GM10248 (cell line): ENCODE measurements at regions of chr2 and their contacts with region 1.

Region 1: DNA sequence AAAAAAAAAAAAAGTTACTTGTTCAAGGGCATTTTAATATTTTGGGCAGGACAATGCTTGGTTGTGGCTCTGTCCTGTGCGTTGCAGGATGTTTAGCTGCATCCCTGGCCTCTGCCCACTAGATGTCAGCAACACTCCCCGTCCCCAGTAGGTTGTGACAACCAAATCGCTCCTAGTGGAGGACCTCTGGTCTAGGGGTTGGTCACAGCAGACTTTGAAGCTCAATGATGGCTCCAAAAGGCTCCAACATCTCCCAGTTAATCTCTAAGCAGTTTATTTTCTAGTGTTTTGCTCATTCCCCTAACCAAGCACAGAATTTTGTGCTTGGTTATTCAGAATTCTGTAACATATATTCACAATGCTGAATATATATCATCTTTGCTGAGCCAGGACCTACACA is 67.0 kb downstream of the CHRNA1 start:
- DNase-seq: peak; percentile 77
- CTCF ChIP-seq: peak; percentile 86

Region 2: GRCh38 chr2:174300089-174300488 is 397.2 kb before region 1 on chr2:
- CTCF ChIA-PET with region 1: no interaction called
- POLR2A ChIA-PET with region 1: no interaction called
- DNase-seq: no peak
- CTCF ChIP-seq: no peak

Region 3: DNA sequence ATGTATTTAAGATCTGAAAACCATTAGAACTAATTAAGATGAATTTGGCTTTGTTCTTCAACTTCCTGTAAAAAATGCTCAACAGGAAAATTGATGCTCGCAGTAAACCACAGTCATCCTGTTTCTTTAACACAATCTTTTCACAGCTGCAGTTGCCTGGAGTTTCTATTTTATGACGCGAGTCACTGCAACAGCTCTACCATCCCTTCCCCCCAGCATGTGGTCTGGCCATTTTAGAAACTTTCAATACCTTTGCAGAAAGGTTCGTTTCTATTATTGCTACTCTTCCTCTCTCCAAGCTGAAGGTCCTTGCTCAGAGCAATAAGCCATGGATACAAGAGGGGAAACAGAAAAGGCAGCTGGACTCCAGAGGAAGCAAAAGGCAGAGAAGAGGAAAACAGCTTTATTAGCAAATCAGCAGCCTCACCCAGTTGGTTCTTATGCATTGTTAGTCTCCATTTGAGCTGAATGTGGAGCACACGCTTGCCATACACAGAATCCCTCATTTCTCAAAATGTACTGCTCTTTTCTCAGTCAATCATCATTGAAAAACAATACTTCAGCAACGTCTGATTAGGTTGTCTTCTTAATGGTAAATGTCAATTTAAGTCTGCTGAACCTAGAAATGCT is 103.6 kb before region 1 on chr2:
- CTCF ChIA-PET with region 1: interaction called, 10 read pairs
- POLR2A ChIA-PET with region 1: no interaction called
- DNase-seq: peak; percentile 50
- CTCF ChIP-seq: no peak

Region 4: DNA sequence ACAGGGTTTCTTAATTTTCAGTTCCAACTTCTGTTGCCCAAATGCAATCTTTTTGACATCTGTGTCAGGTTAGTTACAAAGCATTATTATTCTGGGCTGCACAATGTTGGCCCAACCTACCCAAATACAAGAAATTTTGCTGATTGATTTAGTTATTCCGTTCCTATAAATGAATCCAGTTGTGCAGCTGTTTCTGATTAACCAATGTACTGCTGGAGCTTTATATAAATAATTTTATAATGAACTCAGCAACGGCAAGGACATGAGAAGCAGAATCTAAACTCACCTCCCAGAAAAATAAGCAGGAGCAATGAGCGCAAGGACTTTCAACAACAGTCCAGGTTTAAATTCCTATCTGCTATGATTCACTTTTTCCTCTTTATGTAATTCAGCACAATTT is 23.4 kb before region 1 on chr2:
- CTCF ChIA-PET with region 1: interaction called, 10 read pairs
- POLR2A ChIA-PET with region 1: no interaction called
- DNase-seq: no peak
- CTCF ChIP-seq: no peak

Region 5: DNA sequence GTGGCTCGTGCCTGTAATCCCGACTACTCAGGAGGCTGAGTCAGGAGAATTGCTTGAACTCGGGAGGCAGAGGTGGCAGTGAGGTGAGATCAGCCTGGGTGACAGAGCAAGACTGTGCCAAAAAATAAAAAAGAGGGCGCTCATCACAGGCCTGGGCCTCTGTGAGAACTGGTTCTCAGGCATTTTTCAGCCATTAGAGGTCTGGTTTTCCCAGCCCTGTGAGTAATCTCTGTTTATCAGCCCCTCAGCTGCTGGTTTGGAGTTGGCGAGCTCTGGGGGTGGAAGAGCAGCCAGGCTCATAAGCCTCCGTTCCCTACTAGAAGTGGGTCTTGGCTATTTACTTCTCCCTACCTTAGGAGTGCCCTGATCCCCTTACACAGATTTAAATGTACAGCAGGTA is 14.0 kb after region 1 on chr2:
- CTCF ChIA-PET with region 1: interaction called, 62 read pairs
- POLR2A ChIA-PET with region 1: no interaction called
- DNase-seq: no peak
- CTCF ChIP-seq: no peak

Region 6: DNA sequence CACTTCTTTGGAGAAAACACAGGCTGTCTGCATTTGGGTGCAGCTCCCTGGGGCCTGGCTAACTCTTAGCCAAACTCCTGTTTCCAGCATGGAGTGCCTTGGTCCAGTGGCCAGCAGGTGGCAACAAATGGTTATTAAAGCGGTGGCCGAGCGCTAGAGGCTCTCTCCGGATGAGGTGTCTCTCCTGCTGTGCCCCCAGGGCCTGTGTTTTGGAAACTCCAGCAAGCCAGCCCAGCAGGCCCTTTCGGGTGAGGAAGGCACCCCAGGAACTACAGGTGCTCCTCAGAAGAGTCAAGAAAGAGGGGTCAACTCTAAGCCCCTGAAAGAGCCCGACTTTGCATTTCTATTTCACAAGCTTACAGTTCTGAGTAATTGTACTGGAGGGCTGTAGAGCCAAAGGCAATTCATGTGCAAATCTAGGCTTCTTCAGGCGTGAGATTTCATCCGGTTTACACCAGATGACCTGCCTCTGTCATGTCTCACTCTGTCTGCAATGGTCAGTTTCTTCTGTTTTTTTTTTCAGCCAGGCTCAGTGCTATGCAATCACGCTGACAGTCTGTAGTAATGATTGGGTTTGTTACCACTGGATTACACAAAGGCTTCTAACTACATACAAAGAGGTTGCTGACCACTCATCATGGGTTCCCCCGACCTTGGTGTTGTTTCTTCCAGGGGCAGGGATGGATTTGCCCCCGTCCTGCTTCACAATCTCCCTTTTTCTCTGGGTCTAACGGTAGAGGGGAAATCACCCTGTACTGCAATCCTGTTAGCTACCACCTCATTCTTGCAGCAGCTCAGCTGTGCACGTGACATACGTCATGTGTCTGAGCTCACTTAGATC is 74.6 kb after region 1 on chr2:
- CTCF ChIA-PET with region 1: interaction called, 13 read pairs
- POLR2A ChIA-PET with region 1: no interaction called
- DNase-seq: peak; percentile 69
- CTCF ChIP-seq: peak; percentile 84

Region 7: GRCh38 chr2:174805803-174806202 is 108.5 kb after region 1 on chr2:
- CTCF ChIA-PET with region 1: no interaction called
- POLR2A ChIA-PET with region 1: no interaction called
- DNase-seq: no peak
- CTCF ChIP-seq: no peak